ENCODE measurements at regions of chr7 and their contacts with region 1.

Region 1: GRCh38 chr7:94395141-94396036 is 694 bp downstream of the COL1A2 start:
- DNase-seq: peak; percentile 52
- ATAC-seq: peak; percentile 69
- H3K4me3 Mint-ChIP-seq: peak overlapping the region; percentile 48
- H3K27ac Mint-ChIP-seq: no peak overlapping the region
- H3K4me1 Mint-ChIP-seq: peaks cover 26% of the 10 kb centered on the region
- H3K27me3 Mint-ChIP-seq: peaks cover 16% of the 10 kb centered on the region
- CTCF ChIP-seq: peak; percentile 68

Region 2: GRCh38 chr7:93245525-93246432 is 1149.6 kb before region 1 on chr7:
- CTCF ChIA-PET with region 1: no interaction called
- POLR2A ChIA-PET with region 1: no interaction called
- intact Hi-C with region 1: loop called (anchors 10 kb)
- DNase-seq: no peak
- ATAC-seq: no peak
- H3K4me3 Mint-ChIP-seq: no peak overlapping the region
- H3K27ac Mint-ChIP-seq: no peak overlapping the region
- H3K4me1 Mint-ChIP-seq: peaks cover 8% of the 10 kb centered on the region
- H3K27me3 Mint-ChIP-seq: no peaks in the 10 kb centered on the region
- CTCF ChIP-seq: peak; percentile 78

Region 3: GRCh38 chr7:93715234-93715633 is 680.2 kb before region 1 on chr7:
- CTCF ChIA-PET with region 1: interaction called, 3 read pairs
- POLR2A ChIA-PET with region 1: no interaction called
- intact Hi-C with region 1: loop called (anchors 10 kb)
- DNase-seq: peak; percentile 53
- ATAC-seq: no peak
- H3K4me3 Mint-ChIP-seq: no peak overlapping the region
- H3K27ac Mint-ChIP-seq: no peak overlapping the region
- H3K4me1 Mint-ChIP-seq: no peaks in the 10 kb centered on the region
- H3K27me3 Mint-ChIP-seq: peaks cover 7% of the 10 kb centered on the region
- CTCF ChIP-seq: peak; percentile 37

Region 4: DNA sequence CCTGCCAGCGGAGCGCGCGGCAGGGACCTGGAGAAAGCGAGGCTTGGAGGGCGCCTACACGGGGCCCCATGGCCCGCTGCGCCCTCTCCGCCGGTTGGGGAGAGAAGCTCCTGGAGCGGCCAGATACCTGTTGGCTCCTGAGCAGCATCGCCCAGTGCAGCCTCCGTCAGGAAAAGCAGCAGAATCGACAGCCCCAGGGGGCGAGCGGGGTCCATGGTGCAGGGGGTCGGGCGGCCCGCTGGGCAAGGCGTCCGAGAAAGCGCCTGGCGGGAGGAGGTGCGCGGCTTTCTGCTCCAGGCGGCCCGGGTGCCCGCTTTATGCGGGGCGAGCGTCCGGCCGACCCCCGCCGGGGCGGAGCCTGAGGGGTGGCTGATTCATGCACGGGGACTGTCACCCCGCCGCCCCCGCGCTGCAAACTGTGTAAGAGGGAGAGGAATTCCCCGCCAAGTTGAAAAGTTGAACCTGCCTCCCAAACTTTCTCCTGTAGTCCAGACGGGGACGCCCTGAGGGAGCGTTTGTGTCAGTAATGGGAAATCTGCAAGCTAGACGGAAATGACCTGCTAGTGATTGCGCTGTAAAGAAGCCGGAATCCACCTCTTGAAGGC is 504.8 kb before region 1 on chr7 and contains the start of gene TFPI2:
- CTCF ChIA-PET with region 1: no interaction called
- POLR2A ChIA-PET with region 1: no interaction called
- intact Hi-C with region 1: loop called (anchors 10 kb)
- DNase-seq: peak; percentile 59
- ATAC-seq: peak; percentile 84
- H3K4me3 Mint-ChIP-seq: peak within 1 kb of the TSS; percentile 55
- H3K27ac Mint-ChIP-seq: no peak within 1 kb of the TSS
- H3K4me1 Mint-ChIP-seq: peaks cover 11% of the 10 kb centered on the region
- H3K27me3 Mint-ChIP-seq: peaks cover 38% of the 10 kb centered on the region
- CTCF ChIP-seq: no peak
- total RNA-seq, gene TFPI2: not detected

Region 5: DNA sequence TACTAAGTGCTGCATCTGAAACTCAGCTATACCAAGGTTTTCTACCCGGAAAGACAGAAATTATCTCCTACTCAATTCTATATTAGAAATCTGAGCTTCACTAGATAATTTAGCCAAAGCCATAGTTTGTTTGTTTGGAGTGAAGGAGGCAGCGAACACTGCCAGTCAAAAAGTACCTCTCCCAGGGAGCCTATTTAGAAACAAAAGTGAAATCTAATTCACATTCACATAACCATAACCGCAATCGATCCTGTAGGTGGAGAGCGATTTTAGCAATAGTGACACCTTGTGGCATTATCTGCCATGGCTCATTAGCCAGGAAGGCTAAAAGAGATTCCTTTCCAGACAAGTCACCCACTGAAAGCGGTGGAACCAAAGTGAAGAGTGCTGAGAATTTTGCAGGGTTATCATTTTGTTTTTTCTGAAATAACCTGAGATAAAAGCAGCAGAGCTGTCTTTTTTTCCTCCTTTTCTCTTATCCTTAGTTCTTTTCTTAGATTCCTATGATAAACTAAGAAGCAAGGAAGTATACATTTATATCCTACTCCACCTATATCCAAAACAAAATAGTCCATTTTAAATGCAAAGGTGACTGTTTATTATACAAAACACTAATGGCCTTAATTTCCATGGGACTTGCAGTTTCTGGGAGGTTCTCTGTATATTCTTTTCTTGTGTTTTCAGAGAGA is 307.6 kb before region 1 on chr7:
- CTCF ChIA-PET with region 1: interaction called, 3 read pairs
- POLR2A ChIA-PET with region 1: no interaction called
- intact Hi-C with region 1: loop called (anchors 10 kb)
- DNase-seq: peak; percentile 67
- ATAC-seq: peak; percentile 95
- H3K4me3 Mint-ChIP-seq: peak overlapping the region; percentile 2
- H3K27ac Mint-ChIP-seq: peak overlapping the region; percentile 23
- H3K4me1 Mint-ChIP-seq: peaks cover 6% of the 10 kb centered on the region
- H3K27me3 Mint-ChIP-seq: peaks cover 22% of the 10 kb centered on the region
- CTCF ChIP-seq: peak; percentile 76

Region 6: GRCh38 chr7:94472608-94473007 is 77.2 kb after region 1 on chr7:
- CTCF ChIA-PET with region 1: no interaction called
- POLR2A ChIA-PET with region 1: no interaction called
- intact Hi-C with region 1: no loop called
- DNase-seq: no peak
- ATAC-seq: no peak
- H3K4me3 Mint-ChIP-seq: no peak overlapping the region
- H3K27ac Mint-ChIP-seq: no peak overlapping the region
- H3K4me1 Mint-ChIP-seq: no peaks in the 10 kb centered on the region
- H3K27me3 Mint-ChIP-seq: peaks cover 8% of the 10 kb centered on the region
- CTCF ChIP-seq: no peak

Measured in activated CD8-positive, alpha-beta T cell treated with anti-CD3 and anti-CD28 coated beads for 36 hours (primary cell).